A549 (cell line): ENCODE measurements at regions of chr17 and their contacts with region 1.

Region 1: DNA sequence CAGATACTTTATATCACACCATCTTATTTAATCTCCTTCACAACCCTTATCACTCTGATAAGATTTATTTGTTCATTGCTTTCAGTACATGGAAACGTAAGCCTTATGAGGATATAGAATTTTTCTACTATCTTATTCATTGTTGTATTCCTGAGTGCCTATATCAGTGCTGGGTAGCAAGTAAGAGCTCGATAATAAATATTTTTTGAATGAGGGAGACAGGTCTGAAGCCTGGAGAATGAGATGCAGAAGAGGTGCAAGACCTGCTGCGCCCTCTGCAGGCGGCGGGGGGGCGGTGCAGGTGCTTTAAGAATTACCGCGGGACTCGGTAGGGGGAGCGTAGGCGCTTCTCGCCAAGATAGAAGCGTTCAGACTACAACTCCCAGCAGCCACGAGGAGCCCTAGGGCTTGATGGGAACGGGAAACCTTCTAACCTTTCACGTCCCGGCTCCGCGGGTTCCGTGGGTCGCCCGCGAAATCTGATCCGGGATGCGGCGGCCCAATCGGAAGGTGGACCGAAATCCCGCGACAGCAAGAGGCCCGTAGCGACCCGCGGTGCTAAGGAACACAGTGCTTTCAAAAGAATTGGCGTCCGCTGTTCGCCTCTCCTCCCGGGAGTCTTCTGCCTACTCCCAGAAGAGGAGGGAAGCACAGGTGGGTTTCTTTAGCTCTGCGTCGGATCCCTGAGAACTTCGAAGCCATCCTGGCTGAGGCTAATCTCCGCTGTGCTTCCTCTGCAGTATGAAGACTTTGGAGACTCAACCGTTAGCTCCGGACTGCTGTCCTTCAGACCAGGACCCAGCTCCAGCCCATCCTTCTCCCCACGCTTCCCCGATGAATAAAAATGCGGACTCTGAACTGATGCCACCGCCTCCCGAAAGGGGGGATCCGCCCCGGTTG is at the start of gene WRAP53:
- DNase-seq: peak; percentile 98 to 99
- ATAC-seq: peak; percentile 85 to 91
- H3K4me3 ChIP-seq: peak within 1 kb of the TSS; percentile 77
- H3K27ac ChIP-seq: peak within 1 kb of the TSS; percentile 94 to 95
- H3K4me1 ChIP-seq: peaks cover 23% of the 10 kb centered on the region
- CTCF ChIP-seq: peak; percentile 99
- EP300 ChIP-seq: no peak
- POLR2A ChIP-seq: peak; percentile 66
- RAD21 ChIP-seq: peak; percentile 86
- polyA plus RNA-seq, gene WRAP53: 15.9 and 17.4 TPM in 2 replicates

Region 2: DNA sequence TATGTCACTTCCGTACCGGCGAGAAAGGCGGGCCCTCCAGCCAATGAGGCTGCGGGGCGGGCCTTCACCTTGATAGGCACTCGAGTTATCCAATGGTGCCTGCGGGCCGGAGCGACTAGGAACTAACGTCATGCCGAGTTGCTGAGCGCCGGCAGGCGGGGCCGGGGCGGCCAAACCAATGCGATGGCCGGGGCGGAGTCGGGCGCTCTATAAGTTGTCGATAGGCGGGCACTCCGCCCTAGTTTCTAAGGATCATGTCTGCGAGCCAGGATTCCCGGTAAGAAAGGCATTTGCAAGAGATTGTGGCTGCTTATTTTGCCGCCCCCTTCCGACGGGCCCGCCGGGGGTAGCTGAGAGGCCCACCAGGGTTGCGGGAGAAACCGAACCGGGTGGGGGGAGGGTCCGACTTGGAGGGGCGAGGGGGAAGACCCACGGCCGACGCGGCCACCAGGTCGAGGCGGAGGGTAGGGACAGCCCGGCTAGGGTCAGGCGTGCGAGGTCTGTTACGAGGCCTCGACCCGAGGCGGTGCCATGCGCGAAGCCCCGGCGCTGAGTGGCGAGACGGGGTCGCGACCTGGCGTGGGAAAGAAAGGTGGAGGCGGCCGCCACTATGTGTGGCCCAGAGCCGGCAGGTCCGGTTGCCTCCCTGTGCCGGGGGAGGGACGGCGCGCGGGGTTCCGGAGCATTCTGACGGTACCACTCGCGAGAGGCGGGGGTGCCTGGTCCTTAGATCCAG is 115.4 kb before region 1 on chr17:
- CTCF ChIA-PET with region 1: interaction called, 10 read pairs
- POLR2A ChIA-PET with region 1: interaction called, 11 read pairs
- DNase-seq: peak; percentile 100
- ATAC-seq: peak in 1 of 2 experiments; percentile 1; a peak in 5 of 6 replicates
- H3K4me3 ChIP-seq: peak overlapping the region; percentile 96
- H3K27ac ChIP-seq: peak overlapping the region; percentile 96 to 97
- H3K4me1 ChIP-seq: peaks cover 40% of the 10 kb centered on the region
- CTCF ChIP-seq: no peak
- EP300 ChIP-seq: no peak; a peak in 1 of 5 replicates
- POLR2A ChIP-seq: peak; percentile 98
- RAD21 ChIP-seq: no peak; a peak in 1 of 5 replicates

Region 3: GRCh38 chr17:7614422-7615264 is 73.5 kb before region 1 on chr17 and contains the start of gene FXR2:
- CTCF ChIA-PET with region 1: interaction called, 56 read pairs
- POLR2A ChIA-PET with region 1: interaction called, 58 read pairs
- DNase-seq: peak; percentile 99 to 100
- ATAC-seq: peak; percentile 91 to 96
- H3K4me3 ChIP-seq: peak within 1 kb of the TSS; percentile 84
- H3K27ac ChIP-seq: peak within 1 kb of the TSS; percentile 92 to 95
- H3K4me1 ChIP-seq: peaks cover 29% of the 10 kb centered on the region
- CTCF ChIP-seq: peak; percentile 58
- EP300 ChIP-seq: no peak
- POLR2A ChIP-seq: peak; percentile 77
- RAD21 ChIP-seq: 0 out of 5 replicates have a peak, but pooled peaks have one; percentile 10 to 29
- polyA plus RNA-seq, gene FXR2: 40.7 and 45.3 TPM in 2 replicates

Region 4: DNA sequence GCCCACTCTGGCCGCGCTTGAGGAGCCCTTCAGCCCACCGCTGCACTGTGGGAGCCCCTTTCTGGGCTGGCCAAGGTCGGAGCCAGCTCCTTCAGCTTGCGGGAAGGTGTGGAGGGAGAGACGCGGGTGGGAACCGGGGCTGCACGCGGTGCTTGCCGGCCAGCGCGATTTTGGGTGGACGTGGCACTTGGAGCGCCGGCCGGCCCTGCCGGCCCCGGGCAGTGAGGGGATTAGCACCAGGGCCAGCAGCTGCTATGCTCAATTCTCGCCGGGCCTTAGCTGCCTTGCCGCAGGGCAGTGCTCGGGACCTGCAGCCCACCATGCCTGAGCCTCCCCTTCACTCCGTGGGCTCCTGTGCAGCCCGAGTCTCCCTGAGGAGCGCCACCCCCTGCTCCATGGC is 47.4 kb before region 1 on chr17:
- CTCF ChIA-PET with region 1: interaction called, 191 read pairs
- POLR2A ChIA-PET with region 1: interaction called, 6 read pairs
- DNase-seq: no peak
- ATAC-seq: no peak
- H3K4me3 ChIP-seq: no peak overlapping the region
- H3K27ac ChIP-seq: no peak overlapping the region
- H3K4me1 ChIP-seq: no peaks in the 10 kb centered on the region
- CTCF ChIP-seq: no peak
- EP300 ChIP-seq: no peak
- POLR2A ChIP-seq: no peak
- RAD21 ChIP-seq: no peak

Region 5: DNA sequence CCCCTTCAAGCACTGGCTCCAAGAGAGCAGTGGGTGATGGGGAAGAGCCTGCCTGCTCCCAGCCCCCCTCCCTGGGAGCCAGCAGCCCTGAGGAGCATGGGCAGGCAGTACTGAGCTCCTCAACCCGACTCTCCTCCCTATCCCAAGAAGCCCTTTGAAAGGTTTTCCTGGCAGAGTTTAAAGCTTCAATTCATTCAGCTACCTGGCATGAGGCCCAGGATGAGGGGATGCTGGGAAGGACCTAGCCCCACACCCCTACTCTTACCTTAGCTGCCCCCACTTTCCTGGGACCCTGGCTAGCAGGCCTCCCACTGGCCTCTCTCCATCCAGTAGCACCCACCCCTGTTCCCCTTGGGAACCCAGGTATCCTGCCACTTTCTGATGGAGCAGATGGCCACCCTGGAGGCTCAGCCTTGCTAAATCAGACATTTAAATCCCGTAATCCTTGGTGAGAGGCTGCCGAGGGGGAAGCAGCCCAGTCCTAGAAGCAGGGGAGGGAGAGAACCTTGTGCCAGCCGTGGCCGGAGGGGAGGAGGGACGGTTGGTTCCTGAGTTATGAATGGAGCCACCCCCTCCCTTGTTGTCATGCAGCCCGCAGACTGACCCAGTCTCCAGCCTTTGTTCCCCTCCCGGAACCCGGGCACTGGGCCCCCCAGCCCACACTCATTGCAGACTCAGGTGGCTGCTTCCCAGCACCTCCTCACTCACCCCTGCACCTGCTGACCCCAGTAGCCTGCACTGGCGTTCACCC is 20.3 kb before region 1 on chr17:
- CTCF ChIA-PET with region 1: interaction called, 107 read pairs
- POLR2A ChIA-PET with region 1: interaction called, 40 read pairs
- DNase-seq: no peak
- ATAC-seq: peak; percentile 51 to 57; a peak in 4 of 6 replicates
- H3K4me3 ChIP-seq: no peak overlapping the region
- H3K27ac ChIP-seq: no peak overlapping the region
- H3K4me1 ChIP-seq: no peaks in the 10 kb centered on the region
- CTCF ChIP-seq: no peak
- EP300 ChIP-seq: no peak
- POLR2A ChIP-seq: no peak
- RAD21 ChIP-seq: no peak

Region 6: DNA sequence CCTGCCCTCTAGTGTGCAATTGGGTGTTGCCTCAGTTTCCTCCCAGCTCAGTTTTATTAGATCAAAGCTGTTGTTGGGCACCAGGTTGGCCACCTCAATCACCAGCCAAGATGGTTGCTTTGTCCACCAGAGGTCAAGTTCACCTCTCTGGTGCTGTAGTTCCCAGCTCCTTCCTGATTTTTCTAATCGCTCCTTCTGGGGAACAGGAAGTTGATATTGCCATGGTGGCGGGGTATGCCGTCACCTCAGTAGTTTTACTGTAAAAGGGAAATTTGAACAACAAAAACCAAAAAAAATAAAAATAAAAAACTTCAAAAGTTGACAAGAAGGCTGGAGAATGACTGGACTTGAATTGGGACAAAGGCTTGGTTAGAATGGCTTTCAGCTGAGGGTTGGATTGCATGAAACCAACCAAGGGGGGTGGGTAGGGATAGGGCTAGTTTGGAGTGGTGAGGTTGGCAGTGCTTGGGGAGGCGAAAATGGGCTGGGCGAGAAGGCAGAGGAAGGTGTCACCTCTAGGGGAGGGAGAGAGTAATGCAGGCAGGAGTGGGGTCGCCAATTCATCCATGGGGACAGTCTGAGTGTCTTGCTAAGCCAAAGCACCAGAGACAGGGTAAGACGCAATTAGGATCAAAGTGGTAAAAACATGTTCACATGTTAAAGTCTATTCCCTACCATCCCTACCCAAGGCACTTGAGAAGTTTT is 23.0 kb after region 1 on chr17:
- CTCF ChIA-PET with region 1: interaction called, 103 read pairs
- POLR2A ChIA-PET with region 1: interaction called, 18 read pairs
- DNase-seq: peak; percentile 54 to 68
- ATAC-seq: peak; percentile 60 to 75; a peak in 5 of 6 replicates
- H3K4me3 ChIP-seq: no peak overlapping the region
- H3K27ac ChIP-seq: no peak overlapping the region
- H3K4me1 ChIP-seq: peaks cover 5% of the 10 kb centered on the region
- CTCF ChIP-seq: no peak
- EP300 ChIP-seq: no peak
- POLR2A ChIP-seq: no peak
- RAD21 ChIP-seq: no peak